Activated CD4-positive, alpha-beta T cell treated with anti-CD3 and anti-CD28 coated beads, Interleukin-2, amount 10 ng/mL, durations not matched to agents 24 days and 14 days (primary cell): ENCODE measurements at regions of chr2 and their contacts with region 1.

Region 1: GRCh38 chr2:37683921-37684780 is 12.7 kb upstream of the CDC42EP3 start:
- DNase-seq: peak; percentile 72
- H3K4me3 Mint-ChIP-seq: peak overlapping the region; percentile 46
- H3K27ac Mint-ChIP-seq: peak overlapping the region; percentile 81
- H3K4me1 Mint-ChIP-seq: peaks cover 22% of the 10 kb centered on the region
- H3K27me3 Mint-ChIP-seq: peaks cover 3% of the 10 kb centered on the region

Region 2: DNA sequence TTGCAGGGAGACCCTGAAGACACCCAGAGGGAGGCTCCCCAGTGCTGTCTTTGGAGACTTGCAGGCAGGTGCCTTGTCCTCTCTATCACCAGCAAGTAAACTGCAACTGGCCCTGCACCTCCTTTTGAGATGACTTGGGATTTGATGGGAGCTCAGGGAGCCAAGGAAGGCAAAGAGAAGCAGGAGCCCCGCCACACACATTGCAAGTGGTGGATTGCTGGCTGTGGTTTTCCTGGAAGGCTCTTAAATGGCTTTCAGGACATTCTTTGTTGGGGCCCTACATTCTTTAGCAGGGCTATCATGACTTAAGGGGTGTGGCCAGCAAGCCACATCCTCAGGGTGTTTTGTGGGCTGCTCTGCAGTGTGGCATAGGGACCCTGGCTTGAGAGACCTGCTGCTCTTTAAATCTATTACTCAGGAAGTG is 27.2 kb after region 1 on chr2:
- intact Hi-C with region 1: loop called (anchors 1 kb)
- DNase-seq: peak; percentile 83
- H3K4me3 Mint-ChIP-seq: peak overlapping the region; percentile 1
- H3K27ac Mint-ChIP-seq: peak overlapping the region; percentile 14
- H3K4me1 Mint-ChIP-seq: peaks cover 43% of the 10 kb centered on the region
- H3K27me3 Mint-ChIP-seq: peaks cover under 1% of the 10 kb centered on the region

Region 3: GRCh38 chr2:38432820-38433606 is 748.9 kb after region 1 on chr2:
- intact Hi-C with region 1: no loop called
- DNase-seq: no peak
- H3K4me3 Mint-ChIP-seq: no peak overlapping the region
- H3K27ac Mint-ChIP-seq: no peak overlapping the region
- H3K4me1 Mint-ChIP-seq: no peaks in the 10 kb centered on the region
- H3K27me3 Mint-ChIP-seq: peaks cover 5% of the 10 kb centered on the region